Esophagus muscularis mucosa (tissue), 4 donors: ENCODE measurements at regions of chr11 and their contacts with region 1.

Region 1: DNA sequence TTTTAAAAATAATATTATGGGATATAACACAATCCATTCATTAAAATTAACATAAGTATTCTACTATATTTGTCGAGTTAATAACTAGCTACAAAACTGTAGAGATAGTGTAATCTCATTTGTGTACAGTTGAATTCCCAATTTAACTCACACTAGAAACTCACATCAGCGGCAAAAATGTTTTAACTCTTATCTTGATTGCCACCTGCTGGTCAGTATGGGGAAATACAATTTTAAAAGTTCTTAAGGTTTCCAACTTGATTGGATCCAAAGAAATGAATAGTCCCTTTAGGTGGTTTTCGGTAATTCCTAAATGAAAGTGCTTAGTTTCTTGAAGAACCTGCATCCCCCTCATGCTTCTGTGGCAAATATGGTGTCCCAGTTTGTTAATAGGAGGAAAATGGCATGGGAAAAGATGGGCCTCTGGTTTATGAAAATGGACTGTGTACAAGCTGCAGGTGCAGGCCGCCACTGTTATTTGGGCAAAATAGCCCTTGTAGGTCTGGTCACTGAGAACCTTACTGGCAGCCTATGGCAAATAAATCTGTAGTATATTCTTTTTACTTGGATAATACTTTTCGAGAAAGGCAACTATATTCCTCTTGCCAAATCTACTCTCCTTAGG is 33.7 kb upstream of the SLC17A6 start:
- DNase-seq: no peak
- H3K4me3 ChIP-seq: no peak overlapping the region
- H3K27ac ChIP-seq: no peak overlapping the region
- H3K4me1 ChIP-seq: no peaks in the 10 kb centered on the region
- H3K27me3 ChIP-seq: peaks cover 0 to 3% (median 0%) of the 10 kb centered on the region in 4 donors
- CTCF ChIP-seq: peak; percentile 46 to 76 (median 70)
- EP300 ChIP-seq: no peak
- POLR2A ChIP-seq: no peak

Region 2: GRCh38 chr11:22065472-22065871 is 239.0 kb before region 1 on chr11:
- intact Hi-C with region 1: no loop called
- DNase-seq: no peak
- H3K4me3 ChIP-seq: no peak overlapping the region
- H3K27ac ChIP-seq: no peak overlapping the region
- H3K4me1 ChIP-seq: no peaks in the 10 kb centered on the region
- H3K27me3 ChIP-seq: no peaks in the 10 kb centered on the region
- CTCF ChIP-seq: no peak
- EP300 ChIP-seq: no peak
- POLR2A ChIP-seq: no peak

Region 3: GRCh38 chr11:22169833-22170232 is 134.6 kb before region 1 on chr11:
- intact Hi-C with region 1: loop called (anchors 5 kb)
- DNase-seq: no peak
- H3K4me3 ChIP-seq: no peak overlapping the region
- H3K27ac ChIP-seq: no peak overlapping the region
- H3K4me1 ChIP-seq: no peaks in the 10 kb centered on the region
- H3K27me3 ChIP-seq: no peaks in the 10 kb centered on the region
- CTCF ChIP-seq: peak; percentile 31 to 44 (median 38)
- EP300 ChIP-seq: no peak
- POLR2A ChIP-seq: no peak

Region 4: GRCh38 chr11:22331771-22332170 is 27.3 kb after region 1 on chr11:
- intact Hi-C with region 1: no loop called
- DNase-seq: no peak
- H3K4me3 ChIP-seq: no peak overlapping the region
- H3K27ac ChIP-seq: no peak overlapping the region
- H3K4me1 ChIP-seq: no peaks in the 10 kb centered on the region
- H3K27me3 ChIP-seq: peaks cover 0 to 10% (median 0%) of the 10 kb centered on the region in 4 donors
- CTCF ChIP-seq: no peak
- EP300 ChIP-seq: no peak
- POLR2A ChIP-seq: no peak

Region 5: GRCh38 chr11:22359295-22359694 is 54.8 kb after region 1 on chr11:
- intact Hi-C with region 1: no loop called
- DNase-seq: no peak
- H3K4me3 ChIP-seq: no peak overlapping the region
- H3K27ac ChIP-seq: no peak overlapping the region
- H3K4me1 ChIP-seq: no peaks in the 10 kb centered on the region
- H3K27me3 ChIP-seq: no peaks in the 10 kb centered on the region
- CTCF ChIP-seq: no peak
- EP300 ChIP-seq: no peak
- POLR2A ChIP-seq: no peak